ENCODE measurements at regions of chr6 and their contacts with region 1.

Region 1: GRCh38 chr6:74891349-74891831 is 314.5 kb downstream of the COL12A1 start:
- DNase-seq: peak; percentile 83
- ATAC-seq: peak; percentile 85
- H3K4me3 ChIP-seq: no peak overlapping the region
- H3K27ac ChIP-seq: no peak overlapping the region
- H3K4me1 ChIP-seq: peaks cover 2% of the 10 kb centered on the region; the same call in 1 of the 2 replicates
- H3K27me3 ChIP-seq: no peaks in the 10 kb centered on the region
- CTCF ChIP-seq: no peak
- POLR2A ChIP-seq: no peak
- RAD21 ChIP-seq: no peak

Region 2: DNA sequence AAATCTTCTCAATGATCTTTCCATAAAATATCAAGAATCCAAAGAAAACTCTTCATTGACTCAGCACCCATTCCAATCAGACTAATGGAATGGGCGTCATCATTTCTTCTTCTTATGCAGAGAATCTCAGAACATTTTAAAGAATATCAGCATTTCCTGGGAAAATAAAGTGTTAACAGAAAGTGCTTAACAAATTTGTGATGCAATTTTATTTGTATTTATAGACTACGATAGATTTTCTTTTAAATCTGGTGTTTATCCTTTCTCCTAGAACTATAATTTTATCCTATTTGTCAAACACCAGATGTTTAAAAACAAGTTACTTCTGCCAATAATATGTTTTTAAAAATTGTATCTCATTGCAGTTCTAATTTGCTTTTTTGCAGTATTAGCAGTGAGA is 16.2 kb before region 1 on chr6:
- CTCF ChIA-PET with region 1: interaction called, 13 read pairs
- POLR2A ChIA-PET with region 1: no interaction called
- dilution Hi-C with region 1: no loop called
- in situ Hi-C with region 1: no loop called
- intact Hi-C with region 1: no loop called
- DNase-seq: no peak
- ATAC-seq: no peak
- H3K4me3 ChIP-seq: no peak overlapping the region
- H3K27ac ChIP-seq: no peak overlapping the region
- H3K4me1 ChIP-seq: peaks cover 10% of the 10 kb centered on the region
- H3K27me3 ChIP-seq: no peaks in the 10 kb centered on the region
- CTCF ChIP-seq: no peak
- POLR2A ChIP-seq: no peak
- RAD21 ChIP-seq: no peak